ENCODE measurements at regions of chr3 and their contacts with region 1.

Region 1: DNA sequence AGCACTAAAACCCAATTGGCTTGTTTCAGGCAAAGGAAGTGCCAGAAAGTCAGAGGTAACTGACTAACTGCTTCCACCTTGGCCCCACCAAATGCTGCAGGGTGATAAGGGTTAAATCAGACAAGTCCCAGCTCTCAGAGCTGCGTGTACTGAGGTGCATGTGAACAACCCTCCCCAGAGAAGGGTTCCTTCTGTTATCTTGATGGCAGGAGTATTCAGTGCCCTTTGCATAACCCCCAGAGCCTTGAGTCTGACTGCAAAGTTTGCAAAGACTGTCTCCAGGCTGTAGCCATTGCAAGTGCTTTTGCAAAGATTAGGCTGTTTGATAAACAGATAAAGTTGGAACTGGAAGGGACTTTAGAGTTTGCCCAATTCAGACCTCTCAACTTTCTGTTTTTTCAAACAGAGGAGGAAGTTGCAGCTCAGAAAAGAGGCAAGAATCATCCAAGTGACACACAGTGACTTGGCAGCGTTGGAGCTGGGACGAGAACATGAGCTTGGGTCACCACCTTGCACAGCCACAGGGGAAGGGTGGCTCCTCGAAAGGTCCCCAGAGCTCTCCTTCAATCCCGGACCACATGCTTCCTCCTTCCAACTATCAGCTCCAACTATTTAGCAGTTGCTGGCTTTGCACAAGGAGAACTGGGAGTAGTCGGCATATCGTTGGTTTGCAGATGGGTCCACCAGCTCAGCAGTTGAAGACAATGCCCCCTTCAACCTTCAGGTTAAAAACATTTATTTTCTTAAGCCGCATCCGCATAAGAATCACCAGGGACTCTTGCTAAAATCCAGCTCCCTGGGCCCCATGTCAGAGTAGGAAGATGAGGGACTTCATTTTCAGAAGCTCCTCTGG is 224.8 kb upstream of the HES1 start:
- DNase-seq: peak; percentile 54
- H3K4me3 Mint-ChIP-seq: no peak overlapping the region
- H3K27ac Mint-ChIP-seq: peak overlapping the region; percentile 80
- H3K4me1 Mint-ChIP-seq: peaks cover 35% of the 10 kb centered on the region
- H3K27me3 Mint-ChIP-seq: no peaks in the 10 kb centered on the region

Region 2: GRCh38 chr3:193894121-193894863 is 16.8 kb before region 1 on chr3:
- CTCF ChIA-PET with region 1: no interaction called
- intact Hi-C with region 1: no loop called
- DNase-seq: no peak
- H3K4me3 Mint-ChIP-seq: no peak overlapping the region
- H3K27ac Mint-ChIP-seq: no peak overlapping the region
- H3K4me1 Mint-ChIP-seq: no peaks in the 10 kb centered on the region
- H3K27me3 Mint-ChIP-seq: no peaks in the 10 kb centered on the region

Region 3: GRCh38 chr3:193963808-193964516 is 52.9 kb after region 1 on chr3:
- CTCF ChIA-PET with region 1: interaction called, 3 read pairs
- intact Hi-C with region 1: loop called (anchors 2 kb)
- DNase-seq: peak; percentile 46
- H3K4me3 Mint-ChIP-seq: no peak overlapping the region
- H3K27ac Mint-ChIP-seq: peak overlapping the region; percentile 58
- H3K4me1 Mint-ChIP-seq: peaks cover 19% of the 10 kb centered on the region
- H3K27me3 Mint-ChIP-seq: peaks cover 37% of the 10 kb centered on the region

Region 4: DNA sequence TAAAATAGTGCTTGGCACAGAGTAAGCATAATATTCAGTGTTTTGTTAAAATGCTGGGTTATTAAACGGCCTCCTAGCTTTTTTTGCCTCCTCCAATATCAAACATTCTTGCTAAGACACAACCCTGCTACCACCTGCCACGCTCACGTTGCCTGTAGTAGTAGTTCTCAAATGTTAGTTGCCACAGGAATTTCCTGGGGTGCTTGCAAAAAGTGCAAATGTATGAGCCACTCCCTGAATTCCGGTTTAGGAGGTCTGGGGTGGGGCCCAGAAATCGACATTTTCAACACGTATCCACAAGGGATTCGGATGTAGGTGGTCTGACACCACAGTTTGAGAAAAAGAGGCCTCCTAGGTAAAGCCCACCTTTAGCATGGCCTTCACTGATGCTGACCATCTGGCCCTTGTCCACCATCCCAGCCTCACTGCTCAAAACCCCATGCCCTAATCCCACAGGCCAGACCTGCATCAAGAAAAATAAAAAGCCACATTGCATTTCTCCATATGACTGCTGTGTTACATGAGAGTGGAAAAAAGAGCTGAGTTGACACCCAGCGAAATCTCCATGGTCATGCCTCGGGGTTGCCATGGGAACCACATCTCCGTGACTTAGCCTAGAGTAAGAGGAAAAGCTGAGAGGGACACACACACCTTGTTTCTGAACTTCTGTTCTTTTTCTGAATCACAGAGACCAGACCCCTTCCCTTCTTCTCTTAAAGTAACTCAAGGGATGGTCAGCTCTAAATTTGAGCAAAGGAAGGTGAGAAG is 108.5 kb after region 1 on chr3:
- CTCF ChIA-PET with region 1: no interaction called
- intact Hi-C with region 1: no loop called
- DNase-seq: no peak
- H3K4me3 Mint-ChIP-seq: no peak overlapping the region
- H3K27ac Mint-ChIP-seq: no peak overlapping the region
- H3K4me1 Mint-ChIP-seq: peaks cover 4% of the 10 kb centered on the region
- H3K27me3 Mint-ChIP-seq: no peaks in the 10 kb centered on the region

Measured in activated naive CD4-positive, alpha-beta T cell treated with anti-CD3 and anti-CD28 coated beads for 36 hours (primary cell).